CD8-positive, alpha-beta memory T cell (primary cell): ENCODE measurements at regions of chr2 and their contacts with region 1.

Region 1: GRCh38 chr2:74690571-74690970 is 36.5 kb downstream of the SEMA4F start:
- DNase-seq: peak in 1 of 5 donors; percentile 26
- H3K4me3 ChIP-seq: no peak overlapping the region
- H3K4me3 Mint-ChIP-seq: no peak overlapping the region
- H3K27ac ChIP-seq: no peak overlapping the region
- H3K27ac Mint-ChIP-seq: no peak overlapping the region
- H3K4me1 ChIP-seq: no peaks in the 10 kb centered on the region
- H3K4me1 Mint-ChIP-seq: no peaks in the 10 kb centered on the region
- H3K27me3 ChIP-seq: no peaks in the 10 kb centered on the region
- H3K27me3 Mint-ChIP-seq: peaks cover 2 to 5% of the 10 kb centered on the region in 2 donors

Region 2: GRCh38 chr2:74876081-74876886 is 185.7 kb after region 1 on chr2:
- CTCF ChIA-PET with region 1: interaction called, 11 read pairs
- POLR2A ChIA-PET with region 1: no interaction called
- DNase-seq: peak; percentile 7 to 69 (median 54)
- H3K4me3 ChIP-seq: no peak overlapping the region
- H3K4me3 Mint-ChIP-seq: no peak overlapping the region
- H3K27ac ChIP-seq: no peak overlapping the region
- H3K27ac Mint-ChIP-seq: peak overlapping the region in 1 of 8 donors; percentile 33
- H3K4me1 ChIP-seq: peaks cover 4% of the 10 kb centered on the region
- H3K4me1 Mint-ChIP-seq: peaks cover 0 to 5% (median 0%) of the 10 kb centered on the region in 3 donors
- H3K27me3 ChIP-seq: no peaks in the 10 kb centered on the region
- H3K27me3 Mint-ChIP-seq: no peaks in the 10 kb centered on the region